GM10248 (cell line): ENCODE measurements at regions of chr19 and their contacts with region 1.

Region 1: DNA sequence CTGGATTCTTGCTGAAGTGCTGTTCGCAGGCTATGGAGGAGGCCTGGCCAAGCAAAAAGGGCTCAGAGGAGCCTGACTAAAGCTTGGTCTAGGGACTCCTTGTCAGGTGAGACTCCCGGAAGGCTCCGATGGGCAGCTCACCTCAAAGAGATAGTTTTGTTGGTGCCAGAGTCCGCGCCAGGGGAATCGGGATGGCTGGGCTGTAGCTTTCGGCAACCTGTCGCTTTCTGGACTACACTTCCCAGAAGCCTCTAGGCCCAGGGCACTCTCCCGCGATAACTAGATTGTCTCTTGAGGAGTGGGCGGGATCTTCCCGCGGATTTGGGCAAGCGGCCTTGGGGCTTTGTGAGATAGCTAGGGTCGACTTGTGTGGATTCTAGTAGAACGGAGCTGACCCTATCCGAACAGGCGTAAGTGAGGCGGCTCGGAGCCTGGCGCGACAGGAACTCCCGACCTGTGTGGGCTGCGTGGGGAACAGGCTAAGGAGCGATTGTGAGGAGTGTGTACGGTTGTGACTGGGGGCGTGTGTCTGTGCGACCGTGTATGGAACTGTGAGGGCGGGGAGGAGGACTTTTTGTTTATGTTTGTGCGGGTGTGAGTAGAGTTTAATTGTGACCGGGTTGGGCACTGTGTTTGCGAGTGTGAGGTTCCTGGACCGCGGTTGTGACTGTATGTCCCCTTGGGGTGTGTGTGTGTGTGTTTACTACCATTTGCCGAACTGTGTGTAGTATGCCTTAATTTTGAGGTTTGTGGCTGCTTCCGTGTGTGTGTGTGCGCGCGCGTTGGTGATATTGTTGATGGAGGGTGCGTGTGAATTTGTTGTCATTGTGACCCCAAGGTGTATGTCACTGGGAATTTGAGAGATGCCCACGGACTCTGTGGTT is at the start of gene ZNF345:
- DNase-seq: peak; percentile 91
- CTCF ChIP-seq: no peak

Region 2: GRCh38 chr19:36837906-36838783 is 12.7 kb before region 1 on chr19 and contains the start of gene ZNF790:
- CTCF ChIA-PET with region 1: interaction called, 13 read pairs
- POLR2A ChIA-PET with region 1: interaction called, 12 read pairs
- DNase-seq: peak; percentile 88
- CTCF ChIP-seq: no peak